Dorsolateral prefrontal cortex (tissue), 120 donors: ENCODE measurements at regions of chr1 and their contacts with region 1.

Region 1: DNA sequence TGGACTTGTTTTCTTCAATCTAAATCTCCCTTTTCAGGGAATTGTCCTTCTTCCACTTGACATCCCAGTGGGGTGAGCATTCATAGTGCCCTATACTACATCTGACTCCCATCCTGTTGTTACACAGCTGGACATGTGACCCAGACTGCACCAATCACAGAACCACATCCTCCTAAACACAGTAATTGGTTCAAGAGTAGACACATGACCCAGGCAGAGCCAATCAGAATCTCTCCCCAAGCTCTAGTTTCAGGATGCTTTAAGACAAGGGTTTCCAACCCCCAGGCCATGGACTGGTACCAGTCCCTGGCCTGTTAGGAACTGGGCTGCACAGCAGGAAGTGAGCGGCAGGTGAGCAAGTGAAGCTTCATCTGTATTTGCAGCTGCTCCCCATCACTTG is 5.6 kb upstream of the DDOST start:
- DNase-seq: no peak
- H3K4me3 ChIP-seq: no peak overlapping the region
- H3K27ac ChIP-seq: no peak overlapping the region
- H3K27me3 ChIP-seq: no peaks in the 10 kb centered on the region
- CTCF ChIP-seq: no peak

Region 2: GRCh38 chr1:20551945-20552727 is 114.7 kb before region 1 on chr1 and contains the start of gene FAM43B:
- intact Hi-C with region 1: no loop called
- DNase-seq: peak in 9 of 10 donors; percentile 40 to 82 (median 74)
- H3K4me3 ChIP-seq: peak within 1 kb of the TSS in 58 of 59 donors; percentile 24 to 68 (median 55)
- H3K27ac ChIP-seq: peak within 1 kb of the TSS in 52 of 59 donors; percentile 16 to 85 (median 70)
- H3K27me3 ChIP-seq: peaks cover 0 to 40% (median 12%) of the 10 kb centered on the region in 45 donors
- CTCF ChIP-seq: no peak
- total RNA-seq, gene FAM43B: 6.2 to 32.7 (median 12.3) TPM

Region 3: DNA sequence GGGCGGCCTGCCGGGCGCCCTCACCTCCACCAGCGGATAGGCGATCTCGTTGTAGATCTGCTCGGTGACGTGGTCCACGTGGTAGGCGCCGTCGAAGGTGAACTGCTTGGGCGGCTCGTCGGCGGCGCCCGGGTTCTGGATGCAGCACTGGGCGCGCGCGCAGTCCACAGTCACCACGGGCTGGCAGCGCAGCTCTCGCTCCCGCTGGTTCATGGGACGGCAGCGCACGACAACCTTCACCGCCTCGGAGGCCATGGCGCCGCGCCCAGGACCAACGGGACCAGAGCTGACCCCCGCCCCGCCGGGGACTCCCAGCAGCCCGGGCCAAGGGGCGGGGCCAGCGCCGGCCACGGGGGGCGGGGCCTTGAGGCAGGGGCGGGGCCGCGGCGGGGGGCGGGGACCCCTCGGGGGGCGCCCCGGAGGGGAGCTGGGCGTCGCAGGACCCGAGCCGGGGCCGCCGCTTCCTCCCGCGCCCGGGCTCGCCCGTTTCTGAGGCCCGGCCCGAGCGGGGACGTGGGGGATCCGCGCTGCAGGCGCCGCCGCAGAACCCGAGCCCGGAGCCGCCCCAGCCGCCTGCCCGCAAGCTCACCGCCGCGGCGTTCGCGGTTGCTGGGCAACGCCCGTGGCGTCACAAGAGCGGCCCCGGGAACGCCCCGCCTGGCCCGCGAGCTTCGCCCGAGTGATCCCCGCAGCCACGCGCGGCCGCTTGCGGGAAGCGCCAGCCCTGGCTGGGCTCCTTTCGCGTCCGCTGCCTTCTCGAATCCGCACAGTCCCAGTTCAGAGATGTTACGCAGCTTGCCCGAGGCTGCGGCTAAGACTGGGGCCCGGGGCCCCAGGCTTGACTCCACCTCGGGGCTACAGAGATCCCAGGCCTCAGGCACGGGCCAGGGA is 50.9 kb after region 1 on chr1 and contains the start of gene KIF17:
- intact Hi-C with region 1: loop called in 1 of 2 experiments (anchors 2 kb)
- DNase-seq: peak in 8 of 10 donors; percentile 46 to 86 (median 70)
- H3K4me3 ChIP-seq: peak within 1 kb of the TSS; percentile 29 to 70 (median 55)
- H3K27ac ChIP-seq: peak within 1 kb of the TSS in 10 of 59 donors; percentile 21 to 52 (median 35)
- H3K27me3 ChIP-seq: peaks cover 0 to 5% (median 0%) of the 10 kb centered on the region in 45 donors
- CTCF ChIP-seq: no peak
- total RNA-seq, gene KIF17: 7.7 to 49.6 (median 27.0) TPM